ENCODE measurements at regions of chr1 and their contacts with region 1.

Region 1: GRCh38 chr1:214525535-214526019 is 25.8 kb downstream of the PTPN14 start:
- DNase-seq: peak; percentile 75
- H3K4me3 Mint-ChIP-seq: peak overlapping the region; percentile 4
- H3K27ac Mint-ChIP-seq: peak overlapping the region; percentile 63
- H3K4me1 Mint-ChIP-seq: peaks cover 48% of the 10 kb centered on the region
- H3K27me3 Mint-ChIP-seq: no peaks in the 10 kb centered on the region
- CTCF ChIP-seq: no peak

Region 2: DNA sequence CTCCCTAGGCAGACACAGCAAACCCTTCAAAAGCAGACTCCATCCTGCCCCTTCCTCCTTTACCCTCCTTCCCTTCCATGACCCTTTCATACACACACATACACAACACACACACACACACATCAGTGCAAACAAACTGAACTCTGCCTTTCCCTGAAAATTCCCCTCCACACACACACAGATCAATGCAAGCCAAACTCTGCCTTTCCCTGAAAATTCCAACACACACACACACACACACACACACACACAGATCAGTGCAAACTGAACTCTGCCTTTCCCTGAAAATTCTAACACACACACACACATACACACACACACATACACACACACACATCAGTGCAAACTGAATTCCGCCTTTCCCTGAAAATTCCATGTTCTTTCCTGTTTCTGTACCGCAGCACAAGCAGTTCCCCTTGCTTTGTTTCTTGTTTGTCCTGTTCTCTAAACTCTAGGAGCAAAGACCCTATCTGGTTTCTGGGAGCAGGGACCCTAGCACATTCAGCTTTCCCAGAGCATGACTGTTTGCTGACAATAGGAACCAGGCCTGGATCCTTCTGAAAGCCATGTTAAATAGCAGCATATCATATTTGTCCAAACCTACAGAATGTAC is 65.2 kb before region 1 on chr1:
- CTCF ChIA-PET with region 1: interaction called, 10 read pairs
- POLR2A ChIA-PET with region 1: interaction called, 4 read pairs
- intact Hi-C with region 1: no loop called
- DNase-seq: no peak
- H3K4me3 Mint-ChIP-seq: no peak overlapping the region
- H3K27ac Mint-ChIP-seq: peak overlapping the region; percentile 30
- H3K4me1 Mint-ChIP-seq: peaks cover 52% of the 10 kb centered on the region
- H3K27me3 Mint-ChIP-seq: no peaks in the 10 kb centered on the region
- CTCF ChIP-seq: no peak

Region 3: DNA sequence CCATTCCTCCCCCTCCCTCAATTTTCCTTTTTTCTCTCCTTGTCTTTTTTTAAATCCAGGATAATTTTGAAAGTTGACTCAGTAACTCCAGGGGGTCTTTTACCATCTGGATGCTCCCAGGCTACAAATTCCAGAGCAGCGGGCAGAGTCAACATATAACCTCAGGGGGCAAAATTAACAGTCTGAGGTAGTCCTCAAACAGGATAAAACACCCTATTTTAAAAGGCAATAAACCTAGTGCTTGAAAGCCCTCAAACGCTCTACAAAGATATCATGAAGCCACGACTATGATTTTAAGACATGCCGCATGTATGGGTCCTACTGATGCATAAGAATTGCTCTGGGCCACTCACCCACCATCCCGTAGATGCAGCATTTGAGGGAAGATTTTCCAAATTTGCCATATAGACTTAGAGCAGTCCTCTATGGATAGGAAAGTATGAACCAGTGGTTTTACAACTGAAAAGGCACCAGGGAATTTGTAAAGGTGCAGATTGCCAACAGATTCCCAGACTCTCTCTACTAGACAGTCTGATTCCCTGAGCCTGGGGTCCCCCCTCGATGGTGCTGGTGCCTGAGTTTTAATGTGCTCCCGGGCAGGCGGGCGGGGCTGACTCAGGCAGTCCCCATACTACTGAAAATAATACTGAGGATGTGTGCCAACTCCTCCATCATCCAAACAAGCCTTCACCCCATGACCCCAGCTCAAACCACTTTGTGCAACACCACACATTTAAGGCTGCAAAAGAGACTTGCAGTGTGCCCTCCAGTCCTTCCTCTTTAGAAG is 11.4 kb before region 1 on chr1:
- CTCF ChIA-PET with region 1: interaction called, 7 read pairs
- POLR2A ChIA-PET with region 1: interaction called, 35 read pairs
- intact Hi-C with region 1: no loop called
- DNase-seq: peak; percentile 71
- H3K4me3 Mint-ChIP-seq: no peak overlapping the region
- H3K27ac Mint-ChIP-seq: peak overlapping the region; percentile 78
- H3K4me1 Mint-ChIP-seq: peaks cover 75% of the 10 kb centered on the region
- H3K27me3 Mint-ChIP-seq: no peaks in the 10 kb centered on the region
- CTCF ChIP-seq: no peak

Region 4: GRCh38 chr1:214537219-214537618 is 11.6 kb after region 1 on chr1:
- CTCF ChIA-PET with region 1: interaction called, 5 read pairs
- POLR2A ChIA-PET with region 1: interaction called, 59 read pairs
- intact Hi-C with region 1: no loop called
- DNase-seq: peak; percentile 61
- H3K4me3 Mint-ChIP-seq: no peak overlapping the region
- H3K27ac Mint-ChIP-seq: no peak overlapping the region
- H3K4me1 Mint-ChIP-seq: peaks cover 47% of the 10 kb centered on the region
- H3K27me3 Mint-ChIP-seq: no peaks in the 10 kb centered on the region
- CTCF ChIP-seq: no peak

Region 5: DNA sequence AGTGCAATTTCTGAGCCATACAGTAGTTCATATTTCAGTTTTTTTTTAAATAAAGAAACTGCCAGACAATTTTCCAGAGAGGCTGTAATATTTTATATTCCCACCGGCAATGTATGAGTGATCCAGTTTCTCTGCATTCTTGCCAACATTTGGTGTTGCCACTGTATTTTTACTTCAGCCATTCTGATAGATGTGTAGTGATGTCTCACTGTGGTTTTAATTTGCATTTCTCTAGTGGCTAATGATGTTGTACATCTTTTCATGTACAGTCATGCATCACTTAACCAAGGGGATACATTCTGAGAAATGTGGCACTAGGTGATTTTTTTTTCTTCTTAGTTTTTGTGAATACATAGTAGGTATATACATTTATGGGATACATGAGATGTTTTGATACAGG is 177.0 kb after region 1 on chr1:
- CTCF ChIA-PET with region 1: no interaction called
- POLR2A ChIA-PET with region 1: no interaction called
- intact Hi-C with region 1: no loop called
- DNase-seq: no peak
- H3K4me3 Mint-ChIP-seq: no peak overlapping the region
- H3K27ac Mint-ChIP-seq: no peak overlapping the region
- H3K4me1 Mint-ChIP-seq: no peaks in the 10 kb centered on the region
- H3K27me3 Mint-ChIP-seq: no peaks in the 10 kb centered on the region
- CTCF ChIP-seq: no peak